PC-3 (cell line): ENCODE measurements at regions of chr4 and their contacts with region 1.

Region 1: GRCh38 chr4:97720869-97721432 is 422.3 kb downstream of the STPG2 start:
- DNase-seq: peak; percentile 65
- ATAC-seq: peak; percentile 76
- H3K4me3 ChIP-seq: no peak overlapping the region
- H3K27ac ChIP-seq: no peak overlapping the region
- H3K4me1 ChIP-seq: 0 out of 2 replicates have a peak, but pooled peaks cover 3% of the 10 kb centered on the region
- H3K27me3 ChIP-seq: no peaks in the 10 kb centered on the region
- CTCF ChIP-seq: peak; percentile 64

Region 2: GRCh38 chr4:97073194-97073593 is 647.8 kb before region 1 on chr4:
- CTCF ChIA-PET with region 1: no interaction called
- POLR2A ChIA-PET with region 1: no interaction called
- intact Hi-C with region 1: no loop called
- DNase-seq: no peak
- ATAC-seq: no peak
- H3K4me3 ChIP-seq: no peak overlapping the region
- H3K27ac ChIP-seq: no peak overlapping the region
- H3K4me1 ChIP-seq: no peaks in the 10 kb centered on the region
- H3K27me3 ChIP-seq: no peaks in the 10 kb centered on the region
- CTCF ChIP-seq: no peak

Region 3: GRCh38 chr4:97153042-97153441 is 567.9 kb before region 1 on chr4:
- CTCF ChIA-PET with region 1: no interaction called
- POLR2A ChIA-PET with region 1: no interaction called
- intact Hi-C with region 1: loop called (anchors 5 kb)
- DNase-seq: peak; percentile 35
- ATAC-seq: no peak; the same call in 1 of the 2 replicates
- H3K4me3 ChIP-seq: no peak overlapping the region
- H3K27ac ChIP-seq: no peak overlapping the region
- H3K4me1 ChIP-seq: no peaks in the 10 kb centered on the region
- H3K27me3 ChIP-seq: no peaks in the 10 kb centered on the region
- CTCF ChIP-seq: peak; percentile 54